Dendritic cell treated with granulocyte-macrophage colony-stimulating factor and Interleukin-4, amounts not matched to agents 40 ng/mL and 50 ng/mL, for 4 days (primary cell): ENCODE measurements at regions of chr19 and their contacts with region 1.

Region 1: DNA sequence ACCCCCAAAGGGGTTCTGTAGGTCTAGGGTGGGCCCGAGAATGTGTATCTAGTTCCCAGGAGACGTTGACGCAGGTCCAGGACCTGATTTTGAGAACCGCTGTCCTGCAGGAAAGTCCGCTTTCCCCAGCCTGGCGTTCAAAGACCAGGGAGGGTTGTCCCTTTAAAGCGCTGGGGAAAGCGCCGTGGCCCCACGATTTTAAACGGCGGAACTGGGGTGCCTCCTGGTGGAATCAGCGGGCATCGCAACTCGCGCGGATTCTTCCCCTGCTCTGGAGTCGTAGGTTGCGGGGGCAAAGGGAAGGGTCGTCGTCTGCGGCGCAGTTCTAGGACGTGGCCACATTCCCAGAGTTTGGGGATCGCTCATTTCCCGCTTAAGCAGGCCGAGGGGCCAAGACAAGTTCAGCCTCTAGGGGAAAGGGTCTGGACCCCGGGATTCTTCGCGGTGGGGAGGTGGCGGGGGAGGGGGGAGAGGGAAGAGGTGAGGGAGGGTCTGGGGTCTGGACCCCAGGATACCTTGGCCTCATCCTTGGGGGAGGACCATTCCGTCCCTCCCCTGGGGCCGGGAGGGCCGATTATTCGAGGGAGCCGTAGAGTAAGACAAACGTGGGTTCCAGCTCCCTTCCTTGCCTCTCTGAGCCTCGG is 7.7 kb downstream of the PNMA8B start:
- H3K4me3 Mint-ChIP-seq: no peak overlapping the region
- H3K27ac Mint-ChIP-seq: no peak overlapping the region
- H3K4me1 Mint-ChIP-seq: peaks cover 40% of the 10 kb centered on the region
- H3K27me3 Mint-ChIP-seq: peaks cover 89% of the 10 kb centered on the region

Region 2: GRCh38 chr19:46283771-46284170 is 204.2 kb before region 1 on chr19:
- intact Hi-C with region 1: loop called (anchors 2 kb)
- H3K4me3 Mint-ChIP-seq: no peak overlapping the region
- H3K27ac Mint-ChIP-seq: no peak overlapping the region
- H3K4me1 Mint-ChIP-seq: no peaks in the 10 kb centered on the region
- H3K27me3 Mint-ChIP-seq: peaks cover 10% of the 10 kb centered on the region

Region 3: GRCh38 chr19:46394402-46394797 is 93.5 kb before region 1 on chr19:
- intact Hi-C with region 1: loop called (anchors 2 kb)
- H3K4me3 Mint-ChIP-seq: no peak overlapping the region
- H3K27ac Mint-ChIP-seq: no peak overlapping the region
- H3K4me1 Mint-ChIP-seq: peaks cover 32% of the 10 kb centered on the region
- H3K27me3 Mint-ChIP-seq: peaks cover 25% of the 10 kb centered on the region

Region 4: GRCh38 chr19:46402725-46403124 is 85.2 kb before region 1 on chr19:
- intact Hi-C with region 1: loop called (anchors 1 kb)
- H3K4me3 Mint-ChIP-seq: no peak overlapping the region
- H3K27ac Mint-ChIP-seq: no peak overlapping the region
- H3K4me1 Mint-ChIP-seq: peaks cover 21% of the 10 kb centered on the region
- H3K27me3 Mint-ChIP-seq: peaks cover 82% of the 10 kb centered on the region